PC-3 (cell line): ENCODE measurements at regions of chr5 and their contacts with region 1.

Region 1: GRCh38 chr5:90409318-90410177 is at the start of gene CETN3:
- DNase-seq: peak; percentile 97
- ATAC-seq: peak; percentile 90
- H3K4me3 ChIP-seq: peak within 1 kb of the TSS; percentile 88
- H3K27ac ChIP-seq: peak within 1 kb of the TSS; percentile 82
- H3K4me1 ChIP-seq: peaks cover 35% of the 10 kb centered on the region
- H3K27me3 ChIP-seq: no peaks in the 10 kb centered on the region
- CTCF ChIP-seq: no peak
- total RNA-seq, gene CETN3: 28.5 and 39.2 TPM in 2 replicates

Region 2: DNA sequence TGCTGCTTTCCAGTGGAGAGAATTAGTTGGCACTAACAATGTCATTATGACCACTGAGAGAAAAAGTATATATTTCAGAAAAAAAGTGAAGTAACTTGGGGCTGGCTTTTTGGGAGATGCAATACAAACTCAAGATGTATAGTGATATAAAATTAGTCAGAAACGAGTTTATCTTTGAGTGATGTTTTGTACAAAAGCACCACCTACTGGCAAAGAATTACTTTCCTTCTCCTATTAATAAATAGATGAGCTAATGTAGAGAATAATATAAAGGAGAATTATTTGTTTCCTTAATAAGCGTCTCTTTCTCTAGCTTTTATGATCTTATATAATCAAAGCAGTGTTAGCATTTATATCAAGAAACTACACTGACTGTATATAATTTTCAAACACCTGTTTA is 1685.3 kb before region 1 on chr5:
- CTCF ChIA-PET with region 1: interaction called, 17 read pairs
- POLR2A ChIA-PET with region 1: no interaction called
- intact Hi-C with region 1: no loop called
- DNase-seq: peak; percentile 68
- ATAC-seq: peak; percentile 34
- H3K4me3 ChIP-seq: no peak overlapping the region
- H3K27ac ChIP-seq: no peak overlapping the region
- H3K4me1 ChIP-seq: peaks cover 8% of the 10 kb centered on the region
- H3K27me3 ChIP-seq: no peaks in the 10 kb centered on the region
- CTCF ChIP-seq: peak; percentile 75

Region 3: DNA sequence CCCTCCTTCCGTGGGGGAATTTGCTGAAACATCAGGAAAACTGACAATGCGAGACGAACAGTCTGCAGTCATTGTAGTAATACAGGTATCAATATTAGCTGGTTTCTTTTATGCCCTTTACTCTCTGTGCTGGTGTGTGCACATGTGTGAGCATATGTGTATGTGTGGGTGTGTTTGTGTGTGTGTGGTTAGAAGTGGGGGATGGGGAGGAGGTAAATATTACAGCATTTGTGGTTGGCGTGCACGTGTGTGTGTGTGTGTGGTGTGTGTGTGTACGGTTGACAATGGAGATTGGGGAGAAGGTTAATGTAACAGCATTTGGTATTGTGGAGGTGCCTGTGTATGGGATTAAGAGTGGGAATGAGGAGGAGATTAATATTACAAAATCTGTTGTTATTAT is 368.4 kb after region 1 on chr5:
- CTCF ChIA-PET with region 1: interaction called, 20 read pairs
- POLR2A ChIA-PET with region 1: no interaction called
- intact Hi-C with region 1: no loop called
- DNase-seq: no peak
- ATAC-seq: no peak
- H3K4me3 ChIP-seq: no peak overlapping the region
- H3K27ac ChIP-seq: no peak overlapping the region
- H3K4me1 ChIP-seq: no peaks in the 10 kb centered on the region
- H3K27me3 ChIP-seq: no peaks in the 10 kb centered on the region
- CTCF ChIP-seq: no peak